ENCODE measurements at regions of chr11 and their contacts with region 1.

Region 1: DNA sequence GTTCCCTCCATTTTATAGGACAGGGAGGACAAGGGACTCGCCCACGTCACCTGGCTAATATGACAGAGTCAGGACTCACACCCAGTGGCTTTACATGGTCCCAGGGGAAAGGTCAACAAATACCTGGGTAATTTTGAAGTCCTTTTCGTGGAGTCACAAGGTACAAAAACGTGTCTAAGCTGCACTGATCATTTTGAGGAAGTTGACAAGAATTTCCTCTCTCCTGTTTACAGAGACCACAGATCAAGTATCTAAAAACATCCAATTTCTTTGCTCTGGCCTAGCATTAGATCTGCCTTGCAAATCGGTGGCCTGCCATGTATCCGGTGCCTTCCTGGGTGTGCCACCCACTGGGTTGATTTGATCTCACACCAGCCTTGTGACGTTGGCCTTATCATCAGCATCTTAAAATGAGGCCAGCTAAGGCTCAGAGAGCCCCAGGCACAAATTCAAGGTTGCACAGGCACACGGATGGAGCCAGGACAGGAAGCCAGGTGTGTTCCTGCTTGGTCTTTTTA is 17.6 kb downstream of the GDPD5 start:
- DNase-seq: peak in 1 of 2 experiments; percentile 54
- H3K4me3 ChIP-seq: no peak overlapping the region
- H3K27ac ChIP-seq: no peak overlapping the region
- H3K4me1 ChIP-seq: peaks cover 15% of the 10 kb centered on the region
- H3K27me3 ChIP-seq: no peaks in the 10 kb centered on the region
- CTCF ChIP-seq: no peak

Region 2: GRCh38 chr11:75525596-75526541 is 17.8 kb after region 1 on chr11 and contains the start of gene GDPD5:
- CTCF ChIA-PET with region 1: interaction called, 3 read pairs
- POLR2A ChIA-PET with region 1: interaction called, 15 read pairs
- intact Hi-C with region 1: no loop called
- DNase-seq: peak; percentile 63 to 91
- H3K4me3 ChIP-seq: peak within 1 kb of the TSS; percentile 58
- H3K27ac ChIP-seq: no peak within 1 kb of the TSS
- H3K4me1 ChIP-seq: peaks cover 12% of the 10 kb centered on the region; the same call in 1 of the 2 replicates
- H3K27me3 ChIP-seq: peaks cover 15% of the 10 kb centered on the region; the same call in 1 of the 2 replicates
- CTCF ChIP-seq: 0 out of 2 replicates have a peak, but pooled peaks have one; percentile 36
- total RNA-seq, gene GDPD5: 7.9 and 9.9 TPM in 2 replicates

Measured in PC-9 (cell line).